PC-9 (cell line): ENCODE measurements at regions of chr15 and their contacts with region 1.

Region 1: GRCh38 chr15:77633134-77633912 is 611 bp upstream of the LINGO1 start:
- DNase-seq: peak; percentile 43 to 90
- H3K4me3 ChIP-seq: peak overlapping the region; percentile 42; the same call in 1 of the 2 replicates
- H3K27ac ChIP-seq: no peak overlapping the region
- H3K4me1 ChIP-seq: no peaks in the 10 kb centered on the region
- H3K27me3 ChIP-seq: peaks cover 52% of the 10 kb centered on the region
- CTCF ChIP-seq: peak; percentile 96

Region 2: DNA sequence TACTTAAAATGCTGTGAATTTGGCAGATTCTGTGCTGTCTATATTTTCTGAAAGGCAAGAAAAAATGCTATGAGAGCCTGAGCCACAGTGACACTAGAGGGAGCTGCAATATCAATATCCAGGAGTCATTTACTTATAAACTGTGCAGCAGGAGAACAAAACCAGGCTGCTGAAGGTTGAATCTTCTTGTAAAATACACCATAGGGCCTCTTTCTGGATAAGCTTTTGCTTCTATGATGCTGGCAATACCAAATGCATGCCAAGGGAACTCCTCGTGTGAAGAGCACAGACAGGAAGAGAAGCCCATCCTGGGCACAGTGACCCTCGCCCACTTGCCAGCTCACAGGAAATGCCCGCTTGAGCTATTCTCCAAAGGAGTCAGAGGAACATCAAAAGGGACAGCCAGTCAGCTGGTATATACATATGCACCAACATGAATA is 514.4 kb before region 1 on chr15:
- CTCF ChIA-PET with region 1: no interaction called
- POLR2A ChIA-PET with region 1: no interaction called
- intact Hi-C with region 1: loop called (anchors 1 kb)
- DNase-seq: peak in 1 of 2 experiments; percentile 33
- H3K4me3 ChIP-seq: no peak overlapping the region
- H3K27ac ChIP-seq: no peak overlapping the region
- H3K4me1 ChIP-seq: no peaks in the 10 kb centered on the region
- H3K27me3 ChIP-seq: no peaks in the 10 kb centered on the region
- CTCF ChIP-seq: peak; percentile 87

Region 3: DNA sequence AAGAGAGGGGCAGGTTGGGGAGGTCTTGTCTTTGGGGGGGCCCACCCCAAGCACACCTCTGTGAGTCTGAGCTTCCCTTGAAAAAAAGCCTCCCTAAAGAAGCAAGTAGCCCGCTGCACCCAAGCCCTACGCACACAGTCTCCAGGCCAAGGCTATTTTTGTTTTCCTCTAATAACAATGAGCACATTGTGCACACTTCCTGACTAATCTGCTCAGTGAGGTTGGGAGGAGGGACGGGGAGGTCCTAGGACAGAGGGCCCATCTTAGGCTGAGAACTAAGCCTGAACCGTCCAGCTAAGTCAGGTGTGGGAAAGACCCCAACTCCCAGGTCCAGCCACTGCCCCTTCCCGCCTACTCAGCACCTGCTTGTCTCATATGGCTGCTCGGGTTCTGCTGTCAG is 125.4 kb before region 1 on chr15:
- CTCF ChIA-PET with region 1: no interaction called
- POLR2A ChIA-PET with region 1: no interaction called
- intact Hi-C with region 1: no loop called
- DNase-seq: peak in 1 of 2 experiments; percentile 40
- H3K4me3 ChIP-seq: no peak overlapping the region
- H3K27ac ChIP-seq: 0 out of 2 replicates have a peak overlapping the region, but pooled peaks have one; percentile 49
- H3K4me1 ChIP-seq: peaks cover 39% of the 10 kb centered on the region
- H3K27me3 ChIP-seq: no peaks in the 10 kb centered on the region
- CTCF ChIP-seq: no peak

Region 4: GRCh38 chr15:77608774-77609173 is 24.5 kb before region 1 on chr15:
- CTCF ChIA-PET with region 1: interaction called, 16 read pairs
- POLR2A ChIA-PET with region 1: no interaction called
- intact Hi-C with region 1: no loop called
- DNase-seq: no peak
- H3K4me3 ChIP-seq: no peak overlapping the region
- H3K27ac ChIP-seq: no peak overlapping the region
- H3K4me1 ChIP-seq: no peaks in the 10 kb centered on the region
- H3K27me3 ChIP-seq: peaks cover 7% of the 10 kb centered on the region; the same call in 1 of the 2 replicates
- CTCF ChIP-seq: no peak

Region 5: DNA sequence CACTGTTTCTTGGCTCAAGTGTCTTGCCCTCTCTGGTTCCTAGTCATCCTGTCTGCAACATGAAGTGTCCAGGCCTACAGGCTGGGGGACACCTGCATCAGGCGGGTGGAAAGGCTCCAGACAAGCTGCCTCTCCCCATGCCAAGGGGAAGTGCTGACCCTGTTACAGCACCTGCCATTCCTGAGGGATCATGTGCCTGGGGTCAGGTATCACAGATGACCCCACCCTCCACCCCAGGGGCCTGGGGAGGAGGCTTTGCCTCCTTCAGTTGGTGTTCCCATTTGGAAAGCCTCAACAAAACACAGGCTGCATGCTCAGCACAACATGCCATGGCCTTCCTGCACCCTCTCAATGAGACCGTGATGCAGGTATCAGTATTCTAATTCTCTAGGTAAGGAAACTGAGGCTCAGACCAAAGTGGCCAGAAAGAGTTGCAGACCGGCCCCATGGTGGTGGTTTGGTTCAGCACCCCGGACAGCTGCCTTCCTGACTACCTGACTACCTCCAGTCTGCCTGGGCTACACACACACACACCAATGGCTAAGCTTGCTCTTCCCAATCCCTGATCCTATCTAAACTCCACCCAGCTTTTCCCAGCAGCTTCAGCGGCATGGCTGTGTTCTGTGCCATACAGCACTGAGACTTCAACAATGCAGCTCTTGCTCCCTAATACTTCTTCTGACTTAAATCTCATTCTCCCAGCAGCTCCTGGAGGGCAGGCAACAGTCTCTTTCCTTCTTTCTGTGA is 69.1 kb after region 1 on chr15:
- CTCF ChIA-PET with region 1: no interaction called
- POLR2A ChIA-PET with region 1: no interaction called
- intact Hi-C with region 1: no loop called
- DNase-seq: peak in 1 of 2 experiments; percentile 35
- H3K4me3 ChIP-seq: no peak overlapping the region
- H3K27ac ChIP-seq: no peak overlapping the region
- H3K4me1 ChIP-seq: no peaks in the 10 kb centered on the region
- H3K27me3 ChIP-seq: peaks cover 72% of the 10 kb centered on the region
- CTCF ChIP-seq: no peak

Region 6: GRCh38 chr15:77821188-77821958 is 188.1 kb after region 1 on chr15:
- CTCF ChIA-PET with region 1: interaction called, 9 read pairs
- POLR2A ChIA-PET with region 1: no interaction called
- intact Hi-C with region 1: loop called (anchors 1 kb)
- DNase-seq: peak in 1 of 2 experiments; percentile 52
- H3K4me3 ChIP-seq: no peak overlapping the region
- H3K27ac ChIP-seq: no peak overlapping the region
- H3K4me1 ChIP-seq: no peaks in the 10 kb centered on the region
- H3K27me3 ChIP-seq: peaks cover 43% of the 10 kb centered on the region
- CTCF ChIP-seq: peak; percentile 79

Region 7: DNA sequence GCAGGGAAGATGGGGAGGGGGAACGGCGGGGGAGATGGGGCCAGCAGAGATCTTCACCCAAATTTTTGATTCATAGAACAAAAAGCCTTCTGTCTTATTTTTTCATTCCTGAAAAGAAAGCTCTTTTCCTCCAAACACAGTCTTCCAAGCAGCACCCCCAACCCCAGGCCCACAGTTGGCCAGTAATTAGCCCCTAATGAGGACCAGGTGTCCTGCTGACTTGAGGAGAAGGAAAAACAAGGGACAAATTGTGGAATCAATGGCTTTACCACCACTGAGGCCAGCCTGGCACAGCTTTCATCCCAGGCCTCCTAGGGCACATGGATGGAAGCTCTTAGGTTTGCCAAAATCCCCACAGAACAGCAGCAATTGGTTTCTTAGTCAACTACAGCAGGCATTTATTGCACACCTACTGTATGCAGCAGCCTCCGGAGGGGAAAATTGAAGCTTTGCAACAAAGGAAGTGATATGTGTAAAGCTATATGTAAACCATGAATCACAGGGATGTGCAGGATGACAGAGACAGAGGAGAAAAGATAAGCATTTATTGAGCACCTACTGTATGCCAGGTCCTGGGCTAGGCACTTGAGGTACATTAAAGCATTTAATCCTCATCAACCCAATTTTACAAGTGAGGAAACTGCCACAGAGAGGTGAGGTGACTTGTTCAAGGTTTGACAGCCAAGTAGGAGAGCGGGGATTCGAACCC is 244.7 kb after region 1 on chr15:
- CTCF ChIA-PET with region 1: no interaction called
- POLR2A ChIA-PET with region 1: no interaction called
- intact Hi-C with region 1: loop called (anchors 5 kb)
- DNase-seq: no peak
- H3K4me3 ChIP-seq: no peak overlapping the region
- H3K27ac ChIP-seq: no peak overlapping the region
- H3K4me1 ChIP-seq: peaks cover 9% of the 10 kb centered on the region; the same call in 1 of the 2 replicates
- H3K27me3 ChIP-seq: no peaks in the 10 kb centered on the region
- CTCF ChIP-seq: no peak